ENCODE measurements at regions of chr12 and their contacts with region 1.

Region 1: GRCh38 chr12:6778574-6779550 is 6.5 kb downstream of the LAG3 start:
- DNase-seq: peak; percentile 80 to 92 (median 88)
- ATAC-seq: peak; percentile 72
- H3K4me3 ChIP-seq: peak overlapping the region; percentile 40 to 64
- H3K4me3 Mint-ChIP-seq: peak overlapping the region; percentile 85
- H3K27ac ChIP-seq: peak overlapping the region in 1 of 2 experiments; percentile 8
- H3K27ac Mint-ChIP-seq: peak overlapping the region; percentile 71
- H3K4me1 ChIP-seq: peaks cover 20% of the 10 kb centered on the region
- H3K4me1 Mint-ChIP-seq: peaks cover 27% of the 10 kb centered on the region
- H3K27me3 ChIP-seq: no peaks in the 10 kb centered on the region
- H3K27me3 Mint-ChIP-seq: peaks cover 12% of the 10 kb centered on the region
- CTCF ChIP-seq: peak; percentile 94

Region 2: GRCh38 chr12:5643266-5643665 is 1135.6 kb before region 1 on chr12:
- CTCF ChIA-PET with region 1: no interaction called
- POLR2A ChIA-PET with region 1: no interaction called
- intact Hi-C with region 1: no loop called
- DNase-seq: no peak
- ATAC-seq: no peak
- H3K4me3 ChIP-seq: no peak overlapping the region
- H3K4me3 Mint-ChIP-seq: no peak overlapping the region
- H3K27ac ChIP-seq: no peak overlapping the region
- H3K27ac Mint-ChIP-seq: no peak overlapping the region
- H3K4me1 ChIP-seq: no peaks in the 10 kb centered on the region
- H3K4me1 Mint-ChIP-seq: no peaks in the 10 kb centered on the region
- H3K27me3 ChIP-seq: no peaks in the 10 kb centered on the region
- H3K27me3 Mint-ChIP-seq: peaks cover 18% of the 10 kb centered on the region
- CTCF ChIP-seq: no peak

Region 3: GRCh38 chr12:6563448-6564050 is 215.3 kb before region 1 on chr12:
- CTCF ChIA-PET with region 1: no interaction called
- POLR2A ChIA-PET with region 1: no interaction called
- intact Hi-C with region 1: loop called in 1 of 2 experiments (anchors 5 kb)
- DNase-seq: peak; percentile 39 to 82 (median 73)
- ATAC-seq: peak; percentile 27
- H3K4me3 ChIP-seq: no peak overlapping the region
- H3K4me3 Mint-ChIP-seq: no peak overlapping the region
- H3K27ac ChIP-seq: no peak overlapping the region
- H3K27ac Mint-ChIP-seq: peak overlapping the region; percentile 78
- H3K4me1 ChIP-seq: peaks cover 18% of the 10 kb centered on the region
- H3K4me1 Mint-ChIP-seq: peaks cover 42% of the 10 kb centered on the region
- H3K27me3 ChIP-seq: no peaks in the 10 kb centered on the region
- H3K27me3 Mint-ChIP-seq: no peaks in the 10 kb centered on the region
- CTCF ChIP-seq: peak; percentile 71

Region 4: GRCh38 chr12:6620137-6620884 is 158.6 kb before region 1 on chr12:
- CTCF ChIA-PET with region 1: interaction called, 4 read pairs
- POLR2A ChIA-PET with region 1: no interaction called
- intact Hi-C with region 1: loop called (anchors 1 kb)
- DNase-seq: peak in 7 of 9 experiments; percentile 21 to 78 (median 59)
- ATAC-seq: peak; percentile 72
- H3K4me3 ChIP-seq: peak overlapping the region; percentile 15 to 35
- H3K4me3 Mint-ChIP-seq: peak overlapping the region; percentile 73
- H3K27ac ChIP-seq: no peak overlapping the region
- H3K27ac Mint-ChIP-seq: peak overlapping the region; percentile 92
- H3K4me1 ChIP-seq: peaks cover 11% of the 10 kb centered on the region
- H3K4me1 Mint-ChIP-seq: peaks cover 39% of the 10 kb centered on the region
- H3K27me3 ChIP-seq: no peaks in the 10 kb centered on the region
- H3K27me3 Mint-ChIP-seq: no peaks in the 10 kb centered on the region
- CTCF ChIP-seq: peak; percentile 69

Region 5: DNA sequence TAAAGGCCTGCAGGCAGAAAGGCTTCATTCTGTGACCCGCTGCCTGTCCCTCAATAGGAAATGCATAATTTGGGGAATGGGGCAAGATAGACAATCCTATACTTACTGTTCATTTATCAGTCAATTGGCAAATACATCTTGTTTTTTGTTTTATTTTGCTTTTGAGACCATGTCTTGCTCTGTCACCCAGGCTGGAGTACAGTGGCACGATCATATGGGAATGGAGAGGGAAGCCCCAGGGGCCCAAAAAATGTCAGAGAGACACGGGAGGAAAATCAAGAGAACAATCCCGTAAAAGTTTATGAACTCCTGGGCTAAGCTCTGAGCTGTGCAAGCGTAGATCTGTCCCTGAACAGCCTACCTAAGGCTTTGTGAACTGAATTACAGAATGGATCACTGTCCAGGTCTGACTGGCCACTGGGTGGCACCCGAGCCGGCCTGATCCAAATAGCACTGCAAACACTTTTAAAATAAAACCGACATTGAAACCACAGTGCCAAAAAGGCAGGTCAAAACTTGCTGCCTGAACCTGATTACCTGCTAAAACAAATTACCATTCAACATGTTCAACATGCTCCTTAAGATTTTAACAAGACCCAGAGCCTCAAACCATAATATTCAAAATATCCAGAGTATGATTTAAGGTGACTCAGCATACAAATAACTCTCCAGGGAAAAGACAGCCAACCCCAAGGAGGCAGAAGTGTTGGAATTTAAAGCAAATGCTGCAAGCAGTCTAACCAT is 43.2 kb before region 1 on chr12:
- CTCF ChIA-PET with region 1: interaction called, 4 read pairs
- POLR2A ChIA-PET with region 1: no interaction called
- intact Hi-C with region 1: loop called in 1 of 2 experiments (anchors 1 kb)
- DNase-seq: peak in 7 of 9 experiments; percentile 26 to 56 (median 33)
- ATAC-seq: no peak
- H3K4me3 ChIP-seq: no peak overlapping the region
- H3K4me3 Mint-ChIP-seq: no peak overlapping the region
- H3K27ac ChIP-seq: no peak overlapping the region
- H3K27ac Mint-ChIP-seq: peak overlapping the region; percentile 64
- H3K4me1 ChIP-seq: no peaks in the 10 kb centered on the region
- H3K4me1 Mint-ChIP-seq: no peaks in the 10 kb centered on the region
- H3K27me3 ChIP-seq: no peaks in the 10 kb centered on the region
- H3K27me3 Mint-ChIP-seq: no peaks in the 10 kb centered on the region
- CTCF ChIP-seq: no peak

Region 6: DNA sequence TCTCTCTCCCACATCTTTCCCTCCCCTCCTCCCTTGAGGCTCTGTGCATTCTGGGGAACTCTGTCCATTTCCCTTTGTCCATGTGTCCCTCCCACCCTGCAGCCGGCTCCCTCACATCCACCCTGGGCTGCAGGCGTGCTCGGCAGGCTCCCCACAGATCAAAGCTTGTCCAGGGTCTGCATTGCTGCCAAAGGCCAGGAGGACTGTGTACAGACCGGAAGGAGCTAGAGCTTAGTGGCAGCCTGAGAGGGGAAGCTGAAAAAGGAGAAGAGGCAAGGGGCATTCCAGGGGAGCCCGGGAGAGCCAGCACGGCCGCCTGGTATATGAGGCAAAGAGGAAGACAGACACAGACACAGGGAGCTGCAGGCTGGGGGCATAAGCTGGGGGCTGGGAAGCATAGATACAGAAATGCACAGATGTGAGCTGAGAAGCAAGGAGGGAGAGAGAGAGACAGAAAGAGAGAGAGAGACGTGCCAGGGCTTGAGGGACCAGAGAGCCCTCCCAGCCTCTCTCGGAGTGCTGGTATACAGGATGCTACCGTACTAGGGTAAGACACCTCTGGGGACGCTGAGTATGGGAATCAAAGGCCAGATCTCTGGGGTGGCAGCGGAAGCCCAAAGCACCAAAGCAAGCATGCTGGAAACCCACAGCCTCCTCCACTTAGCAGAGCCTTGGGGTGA is 13.8 kb after region 1 on chr12:
- CTCF ChIA-PET with region 1: interaction called, 11 read pairs
- POLR2A ChIA-PET with region 1: no interaction called
- intact Hi-C with region 1: no loop called
- DNase-seq: peak in 8 of 9 experiments; percentile 18 to 70 (median 43)
- ATAC-seq: peak; percentile 93
- H3K4me3 ChIP-seq: peak overlapping the region in 1 of 2 experiments; percentile 25
- H3K4me3 Mint-ChIP-seq: peak overlapping the region; percentile 42
- H3K27ac ChIP-seq: no peak overlapping the region
- H3K27ac Mint-ChIP-seq: peak overlapping the region; percentile 22
- H3K4me1 ChIP-seq: peaks cover 27% of the 10 kb centered on the region
- H3K4me1 Mint-ChIP-seq: peaks cover 33% of the 10 kb centered on the region
- H3K27me3 ChIP-seq: no peaks in the 10 kb centered on the region
- H3K27me3 Mint-ChIP-seq: peaks cover 4% of the 10 kb centered on the region
- CTCF ChIP-seq: no peak